Right lobe of liver (tissue), 6 donors: ENCODE measurements at regions of chr1 and their contacts with region 1.

Region 1: GRCh38 chr1:43668956-43669355 is 19.0 kb downstream of the KDM4A start:
- DNase-seq: no peak
- ATAC-seq: no peak
- H3K4me3 ChIP-seq: no peak overlapping the region
- H3K27ac ChIP-seq: no peak overlapping the region
- H3K4me1 ChIP-seq: no peaks in the 10 kb centered on the region
- H3K27me3 ChIP-seq: no peaks in the 10 kb centered on the region
- CTCF ChIP-seq: no peak
- POLR2A ChIP-seq: no peak

Region 2: GRCh38 chr1:43405219-43405875 is 263.6 kb before region 1 on chr1:
- intact Hi-C with region 1: no loop called
- DNase-seq: no peak
- ATAC-seq: no peak
- H3K4me3 ChIP-seq: no peak overlapping the region
- H3K27ac ChIP-seq: no peak overlapping the region
- H3K4me1 ChIP-seq: no peaks in the 10 kb centered on the region
- H3K27me3 ChIP-seq: no peaks in the 10 kb centered on the region
- CTCF ChIP-seq: no peak
- POLR2A ChIP-seq: no peak

Region 3: GRCh38 chr1:43529206-43529731 is 139.7 kb before region 1 on chr1:
- intact Hi-C with region 1: loop called in 1 of 2 experiments (anchors 10 kb)
- DNase-seq: peak; percentile 83 to 86 (median 85)
- ATAC-seq: peak; percentile 67 to 76 (median 73)
- H3K4me3 ChIP-seq: no peak overlapping the region
- H3K27ac ChIP-seq: no peak overlapping the region
- H3K4me1 ChIP-seq: peaks cover 0 to 21% (median 10%) of the 10 kb centered on the region in 4 donors
- H3K27me3 ChIP-seq: no peaks in the 10 kb centered on the region
- CTCF ChIP-seq: peak; percentile 94 to 97 (median 96)
- POLR2A ChIP-seq: no peak

Region 4: DNA sequence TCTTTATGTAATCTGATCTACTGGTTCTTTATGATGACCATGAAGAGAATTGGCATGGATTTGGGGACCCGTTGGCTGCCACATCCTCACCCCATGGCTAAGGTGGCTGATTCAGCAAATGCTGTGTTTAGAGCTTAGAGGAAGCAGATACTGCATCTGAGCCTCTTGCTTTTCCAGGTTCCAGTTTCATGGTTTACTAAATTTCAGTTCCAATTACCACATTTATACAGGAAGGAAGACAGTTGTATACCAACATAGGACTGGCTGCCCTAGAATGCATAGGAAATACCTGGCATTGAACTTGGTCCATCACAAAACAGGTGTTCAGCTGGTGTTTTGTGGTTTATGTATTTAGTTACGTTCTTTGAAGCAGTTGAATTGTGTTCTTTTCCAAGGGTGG is 145.4 kb after region 1 on chr1:
- intact Hi-C with region 1: no loop called
- DNase-seq: no peak
- ATAC-seq: no peak
- H3K4me3 ChIP-seq: no peak overlapping the region
- H3K27ac ChIP-seq: no peak overlapping the region
- H3K4me1 ChIP-seq: no peaks in the 10 kb centered on the region
- H3K27me3 ChIP-seq: no peaks in the 10 kb centered on the region
- CTCF ChIP-seq: no peak
- POLR2A ChIP-seq: no peak